ENCODE measurements at regions of chr1 and their contacts with region 1.

Region 1: GRCh38 chr1:22077728-22078127 is 25.2 kb downstream of the CDC42 start:
- DNase-seq: no peak
- H3K4me3 ChIP-seq: no peak overlapping the region
- H3K4me3 Mint-ChIP-seq: peak overlapping the region in 5 of 8 donors; percentile 36 to 76 (median 49)
- H3K27ac ChIP-seq: no peak overlapping the region
- H3K27ac Mint-ChIP-seq: peak overlapping the region in 5 of 7 donors; percentile 4 to 82 (median 57)
- H3K4me1 ChIP-seq: peaks cover 92% of the 10 kb centered on the region
- H3K4me1 Mint-ChIP-seq: peaks cover 63 to 96% (median 77%) of the 10 kb centered on the region in 4 donors
- H3K27me3 ChIP-seq: no peaks in the 10 kb centered on the region
- H3K27me3 Mint-ChIP-seq: no peaks in the 10 kb centered on the region

Region 2: GRCh38 chr1:22089787-22090186 is 12.1 kb after region 1 on chr1:
- CTCF ChIA-PET with region 1: interaction called, 3 read pairs
- POLR2A ChIA-PET with region 1: no interaction called
- intact Hi-C with region 1: loop called (anchors 2 kb)
- DNase-seq: peak in 2 of 5 donors; percentile 12 to 15
- H3K4me3 ChIP-seq: peak overlapping the region in 1 of 2 donors; percentile 6
- H3K4me3 Mint-ChIP-seq: peak overlapping the region; percentile 55 to 83 (median 78)
- H3K27ac ChIP-seq: peak overlapping the region; percentile 22
- H3K27ac Mint-ChIP-seq: peak overlapping the region; percentile 76 to 83 (median 79)
- H3K4me1 ChIP-seq: peaks cover 86% of the 10 kb centered on the region
- H3K4me1 Mint-ChIP-seq: peaks cover 61 to 96% (median 78%) of the 10 kb centered on the region in 4 donors
- H3K27me3 ChIP-seq: no peaks in the 10 kb centered on the region
- H3K27me3 Mint-ChIP-seq: no peaks in the 10 kb centered on the region